ENCODE measurements at regions of chr15 and their contacts with region 1.

Region 1: GRCh38 chr15:78195735-78196201 is 38.6 kb downstream of the ACSBG1 start:
- DNase-seq: no peak
- ATAC-seq: peak; percentile 98
- H3K4me3 ChIP-seq: no peak overlapping the region
- H3K27ac ChIP-seq: no peak overlapping the region
- H3K4me1 ChIP-seq: no peaks in the 10 kb centered on the region
- H3K27me3 ChIP-seq: no peaks in the 10 kb centered on the region
- CTCF ChIP-seq: peak; percentile 75 to 90 (median 86)
- POLR2A ChIP-seq: no peak
- RAD21 ChIP-seq: peak; percentile 85

Region 2: DNA sequence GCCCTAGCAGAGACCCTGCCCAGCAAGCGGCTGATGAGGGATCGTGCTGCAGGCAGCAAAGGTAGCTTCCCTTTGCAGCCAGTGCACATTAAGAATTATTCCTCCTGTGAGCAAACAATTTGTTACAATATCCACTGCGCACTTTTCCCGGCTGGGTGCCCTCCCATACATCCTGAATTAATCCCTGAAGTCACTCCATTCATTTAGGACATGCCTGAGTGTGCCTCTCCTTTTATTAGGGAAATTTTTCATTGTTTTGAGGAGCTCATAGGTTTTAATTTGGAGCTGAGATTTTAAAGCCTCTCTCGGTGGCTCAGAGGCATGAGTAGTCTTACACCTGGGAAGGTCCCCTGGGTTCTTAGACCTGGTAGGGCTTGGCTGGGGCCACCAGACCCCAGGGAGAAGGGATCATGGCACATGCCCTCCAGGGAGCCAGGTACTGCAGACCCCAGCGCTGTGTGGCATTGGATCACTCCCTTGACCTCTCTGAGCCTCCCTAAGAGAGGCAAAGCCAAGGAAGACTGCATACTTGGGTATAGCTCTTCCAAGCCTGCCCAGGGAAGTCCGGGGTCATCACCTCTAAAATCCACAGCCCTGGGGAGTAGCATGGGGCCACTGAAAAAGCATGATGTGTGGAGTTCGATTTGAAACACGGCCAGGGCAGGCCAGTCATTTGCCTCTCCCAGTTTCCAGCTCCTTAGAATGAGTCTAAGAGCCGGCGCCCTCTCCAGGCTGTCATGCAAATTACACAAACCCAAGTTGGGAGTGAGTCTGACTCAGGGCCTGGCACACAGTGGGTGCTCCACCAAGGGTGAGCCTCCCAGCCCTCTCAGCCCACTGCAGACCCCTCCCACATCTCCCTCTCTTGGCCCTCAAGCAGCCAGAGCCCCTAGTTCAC is 411.1 kb before region 1 on chr15:
- CTCF ChIA-PET with region 1: no interaction called
- POLR2A ChIA-PET with region 1: no interaction called
- RAD21 ChIA-PET with region 1: no interaction called
- intact Hi-C with region 1: no loop called
- DNase-seq: peak; percentile 23
- ATAC-seq: peak; percentile 93
- H3K4me3 ChIP-seq: no peak overlapping the region
- H3K27ac ChIP-seq: no peak overlapping the region
- H3K4me1 ChIP-seq: no peaks in the 10 kb centered on the region
- H3K27me3 ChIP-seq: no peaks in the 10 kb centered on the region
- CTCF ChIP-seq: peak; percentile 61 to 77 (median 76)
- POLR2A ChIP-seq: no peak
- RAD21 ChIP-seq: peak; percentile 52

Region 3: GRCh38 chr15:77966540-77967290 is 229.1 kb before region 1 on chr15:
- CTCF ChIA-PET with region 1: interaction called, 3 read pairs
- POLR2A ChIA-PET with region 1: no interaction called
- RAD21 ChIA-PET with region 1: no interaction called
- intact Hi-C with region 1: loop called (anchors 1 kb)
- DNase-seq: peak; percentile 38
- ATAC-seq: peak; percentile 96
- H3K4me3 ChIP-seq: no peak overlapping the region
- H3K27ac ChIP-seq: no peak overlapping the region
- H3K4me1 ChIP-seq: no peaks in the 10 kb centered on the region
- H3K27me3 ChIP-seq: no peaks in the 10 kb centered on the region
- CTCF ChIP-seq: peak; percentile 81 to 93 (median 87)
- POLR2A ChIP-seq: no peak
- RAD21 ChIP-seq: peak; percentile 90

Region 4: GRCh38 chr15:78131295-78132061 is 64.3 kb before region 1 on chr15 and contains the start of gene CIB2:
- CTCF ChIA-PET with region 1: interaction called, 5 read pairs
- POLR2A ChIA-PET with region 1: no interaction called
- RAD21 ChIA-PET with region 1: interaction called, 3 to 4 read pairs
- intact Hi-C with region 1: loop called (anchors 5 kb)
- DNase-seq: no peak
- ATAC-seq: peak; percentile 88
- H3K4me3 ChIP-seq: peak within 1 kb of the TSS; percentile 77 to 78
- H3K27ac ChIP-seq: peak within 1 kb of the TSS; percentile 73
- H3K4me1 ChIP-seq: peaks cover 15 to 45% of the 10 kb centered on the region in 2 experiments; a peak in 3 of 4 replicates
- H3K27me3 ChIP-seq: no peaks in the 10 kb centered on the region
- CTCF ChIP-seq: peak; percentile 30 to 59 (median 48); a peak in 5 of 6 replicates
- POLR2A ChIP-seq: peak; percentile 26
- RAD21 ChIP-seq: peak; percentile 63
- total RNA-seq, gene CIB2: 17.3 TPM

Region 5: GRCh38 chr15:78182821-78183220 is 12.9 kb before region 1 on chr15:
- CTCF ChIA-PET with region 1: interaction called, 27 read pairs
- POLR2A ChIA-PET with region 1: no interaction called
- RAD21 ChIA-PET with region 1: interaction called in 1 of 2 experiments, 4 read pairs
- intact Hi-C with region 1: no loop called
- DNase-seq: no peak
- ATAC-seq: no peak
- H3K4me3 ChIP-seq: no peak overlapping the region
- H3K27ac ChIP-seq: no peak overlapping the region
- H3K4me1 ChIP-seq: no peaks in the 10 kb centered on the region
- H3K27me3 ChIP-seq: no peaks in the 10 kb centered on the region
- CTCF ChIP-seq: no peak
- POLR2A ChIP-seq: no peak
- RAD21 ChIP-seq: no peak

Region 6: GRCh38 chr15:78241007-78241406 is 45.2 kb after region 1 on chr15:
- CTCF ChIA-PET with region 1: interaction called, 14 read pairs
- POLR2A ChIA-PET with region 1: no interaction called
- RAD21 ChIA-PET with region 1: no interaction called
- intact Hi-C with region 1: loop called (anchors 1 kb)
- DNase-seq: peak; percentile 63
- ATAC-seq: peak; percentile 99
- H3K4me3 ChIP-seq: no peak overlapping the region
- H3K27ac ChIP-seq: no peak overlapping the region
- H3K4me1 ChIP-seq: peaks cover 2 to 4% of the 10 kb centered on the region in 2 experiments; a peak in 2 of 4 replicates
- H3K27me3 ChIP-seq: no peaks in the 10 kb centered on the region
- CTCF ChIP-seq: peak; percentile 90 to 93 (median 92)
- POLR2A ChIP-seq: no peak
- RAD21 ChIP-seq: peak; percentile 97

Region 7: DNA sequence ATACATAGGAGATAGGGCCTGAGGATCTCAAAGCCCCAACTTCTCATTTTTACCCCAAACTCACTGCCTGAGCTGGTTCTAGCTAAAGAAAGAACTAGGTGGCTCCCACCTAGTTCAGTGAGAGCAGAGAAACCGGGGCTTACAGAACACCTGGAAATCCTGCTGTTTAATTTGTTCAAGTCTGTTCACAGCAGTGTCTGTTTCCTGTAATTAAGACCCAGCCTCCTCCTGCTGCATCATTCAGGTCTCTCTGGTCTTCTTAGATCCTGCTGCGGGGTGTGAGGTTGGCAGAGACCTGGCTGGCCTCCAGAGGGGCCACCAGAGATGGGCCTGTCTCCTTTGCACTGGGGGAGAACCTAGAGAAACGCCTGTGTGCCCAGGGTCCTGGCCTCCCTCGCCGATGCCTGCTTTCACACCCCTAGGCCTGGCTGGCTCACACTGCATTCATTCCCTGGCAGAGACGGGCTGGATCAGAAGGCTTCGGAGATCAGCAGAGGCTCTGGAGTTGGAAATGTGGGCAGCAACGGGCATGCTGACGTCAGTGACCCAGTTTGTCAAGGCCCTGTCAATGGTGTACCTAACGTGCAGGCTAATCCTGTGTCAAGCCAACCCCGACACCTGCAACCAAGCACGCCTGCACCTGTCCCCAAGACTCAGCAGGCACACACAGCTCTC is 430.0 kb after region 1 on chr15:
- CTCF ChIA-PET with region 1: no interaction called
- POLR2A ChIA-PET with region 1: no interaction called
- RAD21 ChIA-PET with region 1: no interaction called
- intact Hi-C with region 1: no loop called
- DNase-seq: no peak
- ATAC-seq: no peak
- H3K4me3 ChIP-seq: no peak overlapping the region
- H3K27ac ChIP-seq: no peak overlapping the region
- H3K4me1 ChIP-seq: no peaks in the 10 kb centered on the region
- H3K27me3 ChIP-seq: no peaks in the 10 kb centered on the region
- CTCF ChIP-seq: no peak
- POLR2A ChIP-seq: no peak
- RAD21 ChIP-seq: no peak